ENCODE measurements at regions of chr6 and their contacts with region 1.

Region 1: DNA sequence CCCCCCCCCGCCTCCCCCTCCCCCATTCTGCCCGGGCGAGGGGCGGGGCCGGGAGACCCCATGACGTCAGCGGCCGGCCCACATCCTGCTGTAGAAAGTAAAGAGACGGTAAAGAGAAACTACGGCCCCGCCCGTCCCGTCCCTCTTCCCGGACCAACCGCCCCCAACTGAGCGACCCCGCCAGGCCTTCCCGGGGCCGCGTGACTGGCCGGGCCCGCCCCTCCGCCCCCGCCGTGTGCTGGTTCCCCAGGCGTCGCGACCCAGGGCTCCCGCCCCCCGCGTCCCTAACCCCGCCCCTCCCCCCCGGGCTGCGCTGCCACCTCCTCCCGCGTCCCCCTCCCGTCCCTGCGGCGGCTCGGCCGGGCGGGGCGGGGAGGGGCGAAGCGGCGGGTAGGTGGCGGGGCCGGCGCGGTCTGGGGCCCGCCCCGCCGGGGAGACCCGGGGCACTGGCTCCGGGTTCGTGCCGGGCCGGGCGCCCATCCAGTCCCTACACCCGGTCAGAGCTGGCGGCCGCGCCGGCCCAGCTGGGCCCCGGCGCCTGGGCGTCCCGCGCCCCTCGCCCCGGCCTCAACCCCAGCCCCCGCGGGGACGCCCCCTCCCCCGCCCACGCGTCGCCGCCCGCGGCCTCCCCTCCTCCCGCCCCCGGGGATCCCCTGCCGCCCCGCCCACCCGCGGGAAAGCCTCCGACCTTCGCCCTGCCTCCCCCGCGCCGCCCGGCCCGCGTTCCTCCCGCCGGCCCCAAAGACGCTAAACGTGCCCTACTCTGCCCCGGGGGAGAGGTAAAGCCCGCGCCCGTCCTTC is 636 bp upstream of the HIVEP1 start:
- DNase-seq: peak; percentile 95 to 97
- H3K4me3 ChIP-seq: peak overlapping the region; percentile 87; the same call in 1 of the 2 replicates
- H3K27ac ChIP-seq: peak overlapping the region; percentile 96; the same call in 1 of the 2 replicates
- H3K4me1 ChIP-seq: peaks cover 41% of the 10 kb centered on the region
- H3K27me3 ChIP-seq: no peaks in the 10 kb centered on the region
- CTCF ChIP-seq: no peak

Region 2: GRCh38 chr6:11585426-11586016 is 426.0 kb before region 1 on chr6:
- CTCF ChIA-PET with region 1: no interaction called
- POLR2A ChIA-PET with region 1: no interaction called
- intact Hi-C with region 1: loop called (anchors 2 kb)
- DNase-seq: peak; percentile 18 to 59
- H3K4me3 ChIP-seq: no peak overlapping the region
- H3K27ac ChIP-seq: no peak overlapping the region
- H3K4me1 ChIP-seq: peaks cover 14% of the 10 kb centered on the region
- H3K27me3 ChIP-seq: no peaks in the 10 kb centered on the region
- CTCF ChIP-seq: peak; percentile 95

Region 3: DNA sequence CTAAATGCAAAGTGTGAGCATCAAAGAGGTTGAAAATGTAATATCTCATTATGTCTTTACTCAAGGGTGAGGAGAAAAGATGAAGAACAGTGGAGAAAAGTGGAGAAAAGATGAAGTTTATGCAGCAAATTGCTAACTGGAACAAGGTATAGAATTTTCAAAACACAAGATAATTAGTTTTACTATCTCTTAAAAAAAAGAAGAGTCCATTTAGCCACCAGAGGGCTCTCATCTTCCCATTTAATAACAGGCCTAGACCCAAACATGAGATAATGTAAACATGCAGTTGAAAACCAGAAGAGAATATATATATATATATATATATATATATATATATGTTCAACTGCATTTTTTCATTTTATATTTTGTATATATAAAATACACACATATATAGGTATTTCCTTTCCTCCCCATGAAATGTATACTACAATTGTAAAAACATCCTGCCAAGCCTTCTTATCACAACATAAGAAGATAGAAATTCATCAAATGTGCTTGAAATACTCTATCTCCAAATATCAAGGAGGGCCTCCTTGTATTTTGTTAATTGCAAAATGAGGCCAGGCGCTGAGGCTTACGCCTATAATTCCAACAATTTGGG is 311.3 kb before region 1 on chr6:
- CTCF ChIA-PET with region 1: no interaction called
- POLR2A ChIA-PET with region 1: interaction called, 4 read pairs
- intact Hi-C with region 1: loop called (anchors 2 kb)
- DNase-seq: peak in 1 of 2 experiments; percentile 59
- H3K4me3 ChIP-seq: no peak overlapping the region
- H3K27ac ChIP-seq: no peak overlapping the region
- H3K4me1 ChIP-seq: no peaks in the 10 kb centered on the region
- H3K27me3 ChIP-seq: no peaks in the 10 kb centered on the region
- CTCF ChIP-seq: peak; percentile 73

Region 4: GRCh38 chr6:11921017-11921438 is 90.4 kb before region 1 on chr6:
- CTCF ChIA-PET with region 1: no interaction called
- POLR2A ChIA-PET with region 1: no interaction called
- intact Hi-C with region 1: loop called (anchors 5 kb)
- DNase-seq: peak; percentile 70 to 85
- H3K4me3 ChIP-seq: no peak overlapping the region
- H3K27ac ChIP-seq: peak overlapping the region; percentile 55
- H3K4me1 ChIP-seq: peaks cover 18% of the 10 kb centered on the region
- H3K27me3 ChIP-seq: no peaks in the 10 kb centered on the region
- CTCF ChIP-seq: no peak

Region 5: GRCh38 chr6:12001004-12001705 is 10.3 kb before region 1 on chr6:
- CTCF ChIA-PET with region 1: no interaction called
- POLR2A ChIA-PET with region 1: no interaction called
- intact Hi-C with region 1: no loop called
- DNase-seq: no peak
- H3K4me3 ChIP-seq: no peak overlapping the region
- H3K27ac ChIP-seq: no peak overlapping the region
- H3K4me1 ChIP-seq: no peaks in the 10 kb centered on the region
- H3K27me3 ChIP-seq: no peaks in the 10 kb centered on the region
- CTCF ChIP-seq: no peak

Region 6: DNA sequence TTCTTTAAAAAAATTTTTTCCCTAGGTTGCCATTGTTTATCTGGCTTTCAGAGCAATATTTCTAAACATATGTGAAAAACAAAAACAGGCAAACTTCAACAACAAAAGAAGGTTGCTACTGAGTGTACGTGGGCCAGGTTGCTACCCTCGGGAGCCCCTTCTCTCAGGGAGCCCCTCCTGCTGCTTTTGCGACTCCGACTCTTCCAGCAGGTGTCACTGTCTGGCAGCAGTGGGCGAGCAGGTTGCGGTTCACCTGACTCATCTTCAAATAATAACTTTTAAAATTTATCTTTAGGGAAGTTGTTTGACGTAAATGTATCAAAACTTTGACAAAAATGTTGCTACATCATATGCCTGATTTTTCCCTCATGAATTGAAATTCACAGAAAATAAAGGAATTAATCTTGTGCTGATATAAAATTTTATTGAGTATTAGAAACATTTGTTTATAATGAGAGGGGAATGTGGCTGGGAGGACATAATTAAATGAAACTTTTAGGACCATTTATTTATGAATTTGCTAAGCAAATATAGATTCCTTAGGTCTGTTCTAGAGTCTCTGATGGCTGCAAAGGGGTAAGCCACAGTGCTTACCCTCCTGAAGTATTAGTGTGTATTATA is 139.4 kb after region 1 on chr6:
- CTCF ChIA-PET with region 1: no interaction called
- POLR2A ChIA-PET with region 1: no interaction called
- intact Hi-C with region 1: loop called (anchors 5 kb)
- DNase-seq: peak in 1 of 2 experiments; percentile 47
- H3K4me3 ChIP-seq: no peak overlapping the region
- H3K27ac ChIP-seq: no peak overlapping the region; the same call in 1 of the 2 replicates
- H3K4me1 ChIP-seq: peaks cover 30% of the 10 kb centered on the region
- H3K27me3 ChIP-seq: no peaks in the 10 kb centered on the region
- CTCF ChIP-seq: peak; percentile 81

Region 7: GRCh38 chr6:12605888-12606345 is 594.4 kb after region 1 on chr6:
- CTCF ChIA-PET with region 1: no interaction called
- POLR2A ChIA-PET with region 1: no interaction called
- intact Hi-C with region 1: loop called (anchors 2 kb)
- DNase-seq: peak; percentile 53 to 79
- H3K4me3 ChIP-seq: no peak overlapping the region
- H3K27ac ChIP-seq: no peak overlapping the region
- H3K4me1 ChIP-seq: peaks cover 16% of the 10 kb centered on the region
- H3K27me3 ChIP-seq: no peaks in the 10 kb centered on the region
- CTCF ChIP-seq: peak; percentile 98